ENCODE measurements at regions of chr3 and their contacts with region 1.

Region 1: GRCh38 chr3:131026321-131027178 is at the starts of genes ASTE1 and NEK11:
- DNase-seq: peak; percentile 69 to 94
- H3K4me3 ChIP-seq: peak within 1 kb of the TSS; percentile 72 to 83
- H3K27ac ChIP-seq: peak within 1 kb of the TSS; percentile 77 to 86
- H3K4me1 ChIP-seq: peaks cover 0 to 18% of the 10 kb centered on the region in 2 donors
- H3K27me3 ChIP-seq: no peaks in the 10 kb centered on the region
- CTCF ChIP-seq: no peak
- total RNA-seq, gene ASTE1: 14.0 TPM
- total RNA-seq, gene NEK11: 4.0 TPM

Region 2: DNA sequence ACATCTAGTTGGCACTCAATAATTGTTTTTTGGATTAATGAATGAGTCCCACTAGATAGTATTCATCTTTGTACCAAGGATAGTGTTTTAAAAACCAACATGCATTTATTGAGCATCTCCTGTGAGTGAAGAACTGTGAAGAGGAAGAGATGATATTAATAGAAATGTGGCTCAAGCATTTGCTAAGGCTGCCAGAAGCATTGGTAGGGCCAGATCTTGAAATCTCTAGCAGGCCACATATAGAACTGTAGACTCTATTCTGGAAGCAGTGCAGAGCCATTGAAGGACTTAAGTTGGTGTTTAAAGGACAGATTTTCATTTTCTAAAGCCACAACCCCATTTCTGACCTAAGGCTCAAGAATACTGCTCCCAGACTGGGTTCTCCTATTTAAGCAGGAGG is 99.1 kb after region 1 on chr3:
- intact Hi-C with region 1: no loop called
- DNase-seq: no peak
- H3K4me3 ChIP-seq: no peak overlapping the region
- H3K27ac ChIP-seq: no peak overlapping the region
- H3K4me1 ChIP-seq: no peaks in the 10 kb centered on the region
- H3K27me3 ChIP-seq: no peaks in the 10 kb centered on the region
- CTCF ChIP-seq: no peak

Region 3: DNA sequence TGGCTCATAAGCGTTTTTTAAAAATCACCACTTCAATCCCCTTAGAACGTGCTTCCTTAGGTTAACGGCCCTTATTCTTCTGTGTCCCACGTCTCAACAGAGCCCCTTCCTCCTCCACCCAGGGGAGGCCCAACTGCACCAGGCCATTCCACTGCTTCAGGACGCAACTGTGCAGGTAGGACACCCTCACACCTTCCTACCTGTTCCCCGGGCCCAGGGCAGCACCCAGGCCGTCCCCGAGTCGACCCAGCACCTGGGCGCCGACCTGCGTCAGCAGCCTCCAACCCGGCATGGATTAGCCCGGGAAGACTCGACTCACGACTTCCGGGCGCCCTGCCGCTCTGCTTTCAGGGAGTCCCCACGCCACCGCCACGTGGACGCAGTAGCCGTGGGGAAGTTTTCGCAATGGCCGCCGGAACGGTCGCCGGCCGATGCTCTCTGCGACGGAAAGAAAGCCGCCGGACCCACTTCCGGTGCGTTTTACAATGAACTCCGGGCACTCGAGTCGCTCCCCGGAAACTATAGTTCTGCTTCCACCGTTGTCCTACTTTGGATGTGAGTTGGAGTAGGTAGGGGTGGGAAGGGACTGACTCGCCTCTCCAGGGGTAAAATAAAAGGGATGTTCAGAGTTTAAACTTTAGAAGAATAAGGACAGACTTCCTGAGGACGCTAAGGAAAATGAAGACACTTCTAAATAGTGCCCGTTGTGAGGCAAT is 476.1 kb after region 1 on chr3 and contains the start of gene MRPL3:
- intact Hi-C with region 1: loop called (anchors 10 kb)
- DNase-seq: peak; percentile 57 to 90
- H3K4me3 ChIP-seq: peak within 1 kb of the TSS; percentile 82 to 96
- H3K27ac ChIP-seq: peak within 1 kb of the TSS; percentile 68
- H3K4me1 ChIP-seq: peaks cover 4 to 12% of the 10 kb centered on the region in 2 donors
- H3K27me3 ChIP-seq: no peaks in the 10 kb centered on the region
- CTCF ChIP-seq: no peak
- total RNA-seq, gene MRPL3: 45.7 TPM